ENCODE measurements at regions of chr7 and their contacts with region 1.

Region 1: GRCh38 chr7:130896898-130897514 is 163.0 kb upstream of the KLF14 start:
- DNase-seq: peak; percentile 91
- H3K4me3 Mint-ChIP-seq: peak overlapping the region; percentile 48
- H3K27ac Mint-ChIP-seq: peak overlapping the region; percentile 95
- H3K4me1 Mint-ChIP-seq: peaks cover 82% of the 10 kb centered on the region
- H3K27me3 Mint-ChIP-seq: no peaks in the 10 kb centered on the region

Region 2: GRCh38 chr7:131040467-131040932 is 143.5 kb after region 1 on chr7:
- intact Hi-C with region 1: loop called (anchors 1 kb)
- DNase-seq: peak; percentile 87
- H3K4me3 Mint-ChIP-seq: peak overlapping the region; percentile 38
- H3K27ac Mint-ChIP-seq: peak overlapping the region; percentile 11
- H3K4me1 Mint-ChIP-seq: peaks cover 25% of the 10 kb centered on the region
- H3K27me3 Mint-ChIP-seq: no peaks in the 10 kb centered on the region

Region 3: DNA sequence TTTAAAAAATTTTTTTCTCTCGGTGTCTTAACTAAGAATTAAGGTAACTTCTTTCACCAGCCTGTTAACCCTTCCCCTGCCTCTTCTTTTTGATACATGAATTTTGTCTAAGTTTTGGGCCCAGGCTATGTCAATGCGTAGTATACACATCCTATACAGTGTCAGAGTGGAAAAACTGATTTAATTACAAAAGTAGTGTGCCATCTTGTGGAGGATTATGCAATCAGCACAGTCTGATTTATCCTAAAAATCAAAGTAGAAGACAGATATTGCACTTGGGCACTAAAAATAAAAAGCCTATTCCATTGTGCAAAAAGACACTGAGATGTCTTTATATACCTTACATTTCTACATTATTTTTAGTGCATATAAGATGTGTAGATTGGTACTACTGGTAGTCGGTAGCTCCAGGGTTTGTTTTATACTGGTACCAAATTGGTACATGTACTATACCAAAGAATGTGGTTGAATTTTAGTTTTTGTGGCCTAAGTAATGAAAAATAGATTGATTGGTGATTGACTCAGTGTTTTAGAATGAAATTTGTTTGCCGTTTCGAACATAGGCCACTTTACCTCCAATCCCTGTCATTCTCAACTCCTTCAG is 527.3 kb after region 1 on chr7:
- intact Hi-C with region 1: loop called (anchors 10 kb)
- DNase-seq: peak; percentile 71
- H3K4me3 Mint-ChIP-seq: no peak overlapping the region
- H3K27ac Mint-ChIP-seq: no peak overlapping the region
- H3K4me1 Mint-ChIP-seq: peaks cover 2% of the 10 kb centered on the region
- H3K27me3 Mint-ChIP-seq: no peaks in the 10 kb centered on the region

Region 4: GRCh38 chr7:131513245-131514061 is 616.4 kb after region 1 on chr7:
- intact Hi-C with region 1: loop called (anchors 5 kb)
- DNase-seq: peak; percentile 94
- H3K4me3 Mint-ChIP-seq: peak overlapping the region; percentile 10
- H3K27ac Mint-ChIP-seq: peak overlapping the region; percentile 34
- H3K4me1 Mint-ChIP-seq: peaks cover 15% of the 10 kb centered on the region
- H3K27me3 Mint-ChIP-seq: peaks cover 5% of the 10 kb centered on the region